ENCODE measurements at regions of chr19 and their contacts with region 1.

Region 1: DNA sequence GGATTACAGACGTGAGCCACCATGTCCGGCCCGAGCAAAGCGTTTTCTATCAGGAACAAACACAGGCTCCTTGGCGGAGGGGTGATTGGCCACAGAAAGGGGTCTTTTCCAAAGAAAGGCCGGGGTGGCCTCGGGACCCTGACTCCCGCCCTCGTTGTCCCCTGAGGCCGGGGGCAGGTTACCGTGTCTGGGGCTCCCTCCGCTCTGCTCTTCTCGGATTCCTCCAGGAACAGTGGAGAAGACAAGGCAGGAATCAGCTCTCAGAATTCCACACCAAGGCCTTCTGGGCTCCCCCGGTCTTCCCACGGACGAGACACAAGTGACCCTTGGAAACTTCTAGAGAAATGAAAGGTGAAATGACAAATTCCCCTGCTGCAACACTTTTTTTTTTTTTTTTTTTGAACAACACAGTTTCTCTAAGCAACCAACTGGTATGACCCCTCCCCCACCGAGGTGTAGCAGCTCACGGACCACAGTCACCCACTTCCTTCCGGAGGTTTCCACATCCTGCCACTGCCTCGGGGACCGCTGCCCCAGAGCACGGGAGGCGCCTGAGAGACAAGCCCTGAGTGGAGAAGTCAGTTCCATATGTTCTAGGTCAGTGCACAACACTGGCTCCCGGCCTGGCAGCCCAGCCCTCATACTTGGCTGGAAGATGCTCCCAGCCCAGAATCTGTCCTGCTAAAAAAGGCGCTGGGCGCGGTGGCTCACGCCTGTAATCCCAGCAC is 11.0 kb downstream of the MOB3A start:
- DNase-seq: peak; percentile 96
- ATAC-seq: peak; percentile 47
- H3K4me3 ChIP-seq: peak overlapping the region; percentile 95
- H3K27ac ChIP-seq: peak overlapping the region; percentile 93
- H3K4me1 ChIP-seq: peaks cover 43% of the 10 kb centered on the region
- H3K27me3 ChIP-seq: no peaks in the 10 kb centered on the region
- CTCF ChIP-seq: no peak
- EP300 ChIP-seq: peak; percentile 92 to 99
- POLR2A ChIP-seq: peak; percentile 93
- RAD21 ChIP-seq: 0 out of 2 replicates have a peak, but pooled peaks have one; percentile 7

Region 2: GRCh38 chr19:1269065-1269477 is 816.1 kb before region 1 on chr19 and contains the start of gene CIRBP:
- CTCF ChIA-PET with region 1: no interaction called
- POLR2A ChIA-PET with region 1: no interaction called
- RAD21 ChIA-PET with region 1: no interaction called
- SMC1A ChIA-PET with region 1: no interaction called
- in situ Hi-C with region 1: loop called (anchors 10 kb)
- intact Hi-C with region 1: no loop called
- DNase-seq: peak; percentile 86
- ATAC-seq: peak; percentile 70
- H3K4me3 ChIP-seq: peak within 1 kb of the TSS; percentile 98
- H3K27ac ChIP-seq: peak within 1 kb of the TSS; percentile 98
- H3K4me1 ChIP-seq: peaks cover 47% of the 10 kb centered on the region
- H3K27me3 ChIP-seq: no peaks in the 10 kb centered on the region
- CTCF ChIP-seq: no peak
- EP300 ChIP-seq: no peak
- POLR2A ChIP-seq: no peak
- RAD21 ChIP-seq: no peak
- polyA plus RNA-seq, gene CIRBP: 27.6 to 52.4 TPM

Region 3: DNA sequence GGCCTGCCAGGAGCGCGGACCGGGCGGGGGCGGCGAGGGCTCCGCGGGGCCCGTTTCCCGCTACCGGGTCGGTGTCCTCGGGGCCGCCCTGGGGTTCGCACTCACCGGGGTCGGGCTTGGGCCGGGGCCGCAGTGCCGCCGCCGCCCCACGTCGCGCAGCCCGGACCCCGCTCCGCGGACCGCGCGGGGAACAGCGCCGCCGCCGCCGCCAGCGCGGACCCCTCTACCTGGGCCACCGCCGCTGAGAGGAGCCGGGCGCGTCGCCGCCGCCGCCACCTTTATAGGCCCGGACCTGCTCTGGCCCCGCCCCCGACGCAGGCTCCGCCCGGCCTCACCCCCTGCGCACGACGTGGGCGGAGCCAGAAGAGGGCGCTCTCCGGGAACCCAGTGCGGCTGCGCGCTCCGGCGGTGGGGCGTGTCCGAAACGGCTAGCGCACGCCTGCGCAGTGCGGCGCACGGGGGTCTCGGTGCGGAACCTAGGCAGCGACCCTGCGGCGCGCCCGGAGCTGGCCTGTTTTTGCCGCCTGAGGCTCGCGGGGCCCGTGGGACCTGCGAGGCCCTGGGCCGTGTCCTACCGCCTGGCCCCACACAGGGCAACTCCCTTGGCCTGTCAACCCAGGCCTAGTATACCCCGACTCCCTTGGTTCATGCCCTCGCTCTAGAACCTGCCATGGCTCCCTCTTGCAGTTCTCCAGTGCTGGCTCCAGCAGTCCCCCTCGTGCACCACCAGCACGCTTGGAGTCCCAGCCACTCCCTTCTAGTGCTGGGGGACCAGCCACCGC is 34.0 kb before region 1 on chr19 and contains the start of gene MKNK2:
- CTCF ChIA-PET with region 1: interaction called, 27 read pairs
- POLR2A ChIA-PET with region 1: interaction called, 110 read pairs
- RAD21 ChIA-PET with region 1: interaction called, 11 read pairs
- SMC1A ChIA-PET with region 1: interaction called, 12 read pairs
- in situ Hi-C with region 1: no loop called
- intact Hi-C with region 1: loop called (anchors 1 kb)
- DNase-seq: no peak
- ATAC-seq: peak; percentile 48
- H3K4me3 ChIP-seq: peak within 1 kb of the TSS; percentile 83
- H3K27ac ChIP-seq: peak within 1 kb of the TSS; percentile 86
- H3K4me1 ChIP-seq: peaks cover 57% of the 10 kb centered on the region
- H3K27me3 ChIP-seq: no peaks in the 10 kb centered on the region
- CTCF ChIP-seq: peak; percentile 49 to 75 (median 55); a peak in 5 of 6 replicates
- EP300 ChIP-seq: no peak
- POLR2A ChIP-seq: peak; percentile 98
- RAD21 ChIP-seq: no peak
- polyA plus RNA-seq, gene MKNK2: 9.6 to 17.6 TPM

Region 4: DNA sequence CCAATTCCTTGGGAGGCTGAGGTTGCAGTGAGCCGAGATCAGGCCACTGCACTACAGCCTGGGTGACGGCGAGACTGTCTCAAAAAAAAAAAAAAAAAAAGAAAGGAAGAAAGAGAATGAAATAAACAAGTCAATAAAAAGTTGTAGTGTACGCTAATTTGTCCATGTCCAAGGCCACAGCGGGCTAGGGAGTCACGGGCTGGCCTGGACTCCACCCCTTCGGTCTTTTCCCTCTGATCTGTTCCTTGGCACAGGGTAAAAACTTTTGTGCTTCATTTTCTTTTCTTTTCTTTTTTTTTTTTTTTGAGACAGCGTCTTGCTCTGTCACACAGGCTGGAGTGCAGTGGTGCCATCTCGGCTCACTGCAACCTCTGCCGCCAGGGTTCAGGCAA is 14.7 kb before region 1 on chr19:
- CTCF ChIA-PET with region 1: interaction called, 11 read pairs
- POLR2A ChIA-PET with region 1: interaction called, 7 read pairs
- RAD21 ChIA-PET with region 1: interaction called, 4 read pairs
- SMC1A ChIA-PET with region 1: interaction called, 3 read pairs
- in situ Hi-C with region 1: no loop called
- intact Hi-C with region 1: no loop called
- DNase-seq: no peak
- ATAC-seq: no peak; the same call in 2 of the 3 replicates
- H3K4me3 ChIP-seq: no peak overlapping the region
- H3K27ac ChIP-seq: no peak overlapping the region
- H3K4me1 ChIP-seq: peaks cover 17% of the 10 kb centered on the region
- H3K27me3 ChIP-seq: no peaks in the 10 kb centered on the region
- CTCF ChIP-seq: no peak
- EP300 ChIP-seq: no peak
- POLR2A ChIP-seq: no peak
- RAD21 ChIP-seq: no peak

Region 5: GRCh38 chr19:2151339-2152229 is 66.4 kb after region 1 on chr19 and contains the start of gene AP3D1:
- CTCF ChIA-PET with region 1: no interaction called
- POLR2A ChIA-PET with region 1: interaction called, 5 read pairs
- RAD21 ChIA-PET with region 1: interaction called, 4 read pairs
- SMC1A ChIA-PET with region 1: interaction called, 3 read pairs
- in situ Hi-C with region 1: no loop called
- intact Hi-C with region 1: loop called (anchors 2 kb)
- DNase-seq: peak; percentile 98
- ATAC-seq: peak; percentile 89
- H3K4me3 ChIP-seq: peak within 1 kb of the TSS; percentile 96
- H3K27ac ChIP-seq: peak within 1 kb of the TSS; percentile 91
- H3K4me1 ChIP-seq: peaks cover 20% of the 10 kb centered on the region
- H3K27me3 ChIP-seq: no peaks in the 10 kb centered on the region
- CTCF ChIP-seq: no peak
- EP300 ChIP-seq: no peak
- POLR2A ChIP-seq: peak; percentile 82
- RAD21 ChIP-seq: no peak
- polyA plus RNA-seq, gene AP3D1: 1.5 to 3.0 TPM

Region 6: GRCh38 chr19:2627319-2627829 is 542.2 kb after region 1 on chr19:
- CTCF ChIA-PET with region 1: no interaction called
- POLR2A ChIA-PET with region 1: no interaction called
- RAD21 ChIA-PET with region 1: no interaction called
- SMC1A ChIA-PET with region 1: no interaction called
- in situ Hi-C with region 1: no loop called
- intact Hi-C with region 1: loop called (anchors 5 kb)
- DNase-seq: no peak
- ATAC-seq: peak; percentile 52
- H3K4me3 ChIP-seq: no peak overlapping the region
- H3K27ac ChIP-seq: peak overlapping the region; percentile 45
- H3K4me1 ChIP-seq: peaks cover 55% of the 10 kb centered on the region
- H3K27me3 ChIP-seq: no peaks in the 10 kb centered on the region
- CTCF ChIP-seq: no peak
- EP300 ChIP-seq: no peak
- POLR2A ChIP-seq: peak; percentile 54; the same call in 1 of the 2 replicates
- RAD21 ChIP-seq: no peak